ENCODE measurements at regions of chr1 and their contacts with region 1.

Region 1: DNA sequence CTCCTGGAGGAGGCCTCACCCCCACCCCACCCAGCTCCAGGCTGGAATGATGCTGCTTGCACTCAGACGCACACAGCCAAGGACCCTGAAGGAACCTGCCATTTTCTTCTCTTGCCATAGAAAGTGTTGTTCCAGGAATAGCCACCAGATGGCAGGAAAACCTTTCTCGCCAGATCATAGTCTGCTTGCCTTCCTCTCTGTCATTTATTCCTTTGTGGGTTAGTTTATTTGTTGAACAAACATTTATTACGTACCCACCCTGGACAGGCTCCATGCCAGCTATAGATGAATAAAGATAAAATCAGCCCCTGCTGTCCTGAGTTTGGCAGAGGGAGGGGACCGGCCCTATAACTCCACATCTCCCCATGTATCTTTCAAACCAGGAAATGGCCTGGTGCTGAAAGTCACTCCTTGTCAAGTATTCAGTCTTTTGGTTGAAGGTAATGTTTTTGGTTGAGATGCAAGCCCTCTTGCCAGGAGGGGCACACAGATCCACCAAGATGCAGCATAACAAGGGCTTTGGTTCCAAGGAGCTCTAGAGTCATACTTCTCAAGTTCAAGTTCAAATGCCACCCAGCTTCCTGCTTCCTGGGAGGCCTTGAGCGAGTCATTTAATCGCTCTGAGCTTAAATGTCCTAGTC is 7.0 kb upstream of the KCNC4 start:
- DNase-seq: no peak
- H3K4me3 ChIP-seq: no peak overlapping the region
- H3K27me3 ChIP-seq: no peaks in the 10 kb centered on the region
- CTCF ChIP-seq: peak; percentile 79

Region 2: GRCh38 chr1:110188035-110188618 is 15.0 kb before region 1 on chr1:
- CTCF ChIA-PET with region 1: interaction called, 17 read pairs
- POLR2A ChIA-PET with region 1: no interaction called
- DNase-seq: peak; percentile 58
- H3K4me3 ChIP-seq: no peak overlapping the region
- H3K27me3 ChIP-seq: no peaks in the 10 kb centered on the region
- CTCF ChIP-seq: no peak

Region 3: DNA sequence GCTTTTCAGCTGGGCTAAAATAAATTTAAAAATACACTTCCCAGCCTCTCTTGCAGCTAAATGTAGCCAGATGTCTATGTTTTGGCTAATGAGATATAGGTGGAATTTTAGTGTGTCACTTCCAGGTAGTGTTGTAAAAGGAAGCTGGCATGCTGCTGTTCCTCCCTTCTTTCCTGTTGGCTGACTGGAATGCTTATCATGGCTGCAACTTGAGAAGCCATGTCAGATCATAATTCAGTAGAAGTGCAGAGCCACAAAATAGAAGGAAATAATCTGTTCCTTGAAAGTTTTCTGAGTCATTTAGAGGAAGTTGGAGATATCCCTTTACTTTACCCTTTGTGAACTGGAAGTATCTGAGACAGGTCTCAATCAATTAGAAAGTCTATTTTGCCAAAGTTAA is 125.1 kb after region 1 on chr1:
- CTCF ChIA-PET with region 1: interaction called, 77 read pairs
- POLR2A ChIA-PET with region 1: no interaction called
- DNase-seq: no peak
- H3K4me3 ChIP-seq: no peak overlapping the region
- H3K27me3 ChIP-seq: no peaks in the 10 kb centered on the region
- CTCF ChIP-seq: no peak

Region 4: GRCh38 chr1:110407260-110408210 is 204.4 kb after region 1 on chr1 and contains the start of gene LAMTOR5:
- CTCF ChIA-PET with region 1: interaction called, 29 read pairs
- POLR2A ChIA-PET with region 1: no interaction called
- DNase-seq: peak; percentile 68
- H3K4me3 ChIP-seq: peak within 1 kb of the TSS; percentile 99
- H3K27me3 ChIP-seq: no peaks in the 10 kb centered on the region
- CTCF ChIP-seq: no peak
- polyA plus RNA-seq, gene LAMTOR5: 236 and 261 TPM in 2 replicates

Region 5: DNA sequence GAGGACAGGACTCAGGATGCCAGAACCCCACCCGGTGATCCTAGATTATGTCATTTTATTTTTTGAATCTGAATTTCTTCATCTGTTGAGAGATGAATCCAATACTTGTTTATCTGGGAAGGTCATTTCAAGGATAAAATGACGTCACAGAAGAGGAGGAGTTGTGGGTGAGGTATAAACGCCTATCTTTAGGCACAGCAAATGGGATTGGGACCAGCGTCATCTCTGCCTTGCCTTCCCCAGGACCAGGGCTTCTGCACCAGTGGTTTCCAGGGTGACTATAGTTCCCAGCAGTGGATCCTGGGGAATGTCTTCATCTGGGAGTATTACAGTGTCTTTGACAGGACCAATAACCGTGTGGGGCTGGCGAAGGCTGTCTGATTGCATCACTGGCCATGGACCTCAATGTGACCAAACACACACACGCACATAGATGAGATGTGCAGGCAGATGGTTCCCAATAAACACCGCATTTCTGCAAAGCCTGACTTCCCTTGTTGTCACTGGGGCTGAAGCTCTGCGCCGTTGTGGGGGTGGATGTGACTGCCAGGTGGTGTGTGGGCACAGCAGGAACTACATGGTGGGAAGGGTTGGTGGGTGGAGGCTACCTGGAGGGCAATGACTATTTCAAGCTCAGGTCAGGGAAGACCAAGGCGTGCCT is 287.8 kb after region 1 on chr1:
- CTCF ChIA-PET with region 1: interaction called, 101 read pairs
- POLR2A ChIA-PET with region 1: no interaction called
- DNase-seq: no peak
- H3K4me3 ChIP-seq: no peak overlapping the region
- H3K27me3 ChIP-seq: peaks cover 5% of the 10 kb centered on the region; the same call in 1 of the 2 replicates
- CTCF ChIP-seq: no peak